PC-9 (cell line): ENCODE measurements at regions of chrX and their contacts with region 1.

Region 1: GRCh38 chrX:75655627-75656026 is 129.4 kb downstream of the MAGEE2 start:
- DNase-seq: no peak
- H3K4me3 ChIP-seq: no peak overlapping the region
- H3K27ac ChIP-seq: no peak overlapping the region
- H3K4me1 ChIP-seq: no peaks in the 10 kb centered on the region
- H3K27me3 ChIP-seq: no peaks in the 10 kb centered on the region
- CTCF ChIP-seq: no peak

Region 2: DNA sequence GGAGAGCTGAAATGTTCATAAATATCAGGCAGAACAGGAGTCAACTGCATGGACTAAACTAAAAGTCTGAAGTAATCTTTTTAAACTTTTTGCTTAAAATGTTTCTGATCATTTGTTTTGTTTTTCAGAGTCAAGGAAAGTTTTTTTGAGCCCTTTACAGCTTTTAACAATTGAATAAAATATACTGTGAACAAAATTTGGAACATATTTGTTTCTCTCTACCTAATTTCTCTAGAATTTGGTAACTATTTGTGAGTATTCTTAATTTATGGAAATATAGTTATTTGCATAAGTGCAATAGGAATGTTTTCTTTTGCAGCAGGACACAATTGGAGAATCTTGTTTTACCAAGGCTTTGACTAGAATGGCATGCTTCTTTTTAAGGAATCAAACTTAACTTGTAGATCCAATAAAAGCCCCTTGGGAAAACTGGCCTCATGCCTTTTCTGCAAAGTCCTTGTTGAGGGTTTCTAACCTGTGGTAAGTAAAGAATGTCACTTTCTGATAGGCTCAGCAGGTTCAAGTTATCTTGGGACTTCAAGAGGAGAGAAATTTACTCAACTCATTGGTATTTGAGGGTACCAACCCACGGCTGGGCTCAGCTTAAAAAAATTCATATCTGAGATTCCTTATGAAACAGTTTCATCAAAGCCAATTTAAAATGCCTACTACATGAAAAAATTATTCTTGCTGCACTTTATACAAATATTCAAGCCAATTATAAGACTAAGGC is 290.2 kb before region 1 on chrX:
- CTCF ChIA-PET with region 1: no interaction called
- POLR2A ChIA-PET with region 1: no interaction called
- intact Hi-C with region 1: no loop called
- DNase-seq: no peak
- H3K4me3 ChIP-seq: no peak overlapping the region
- H3K27ac ChIP-seq: no peak overlapping the region
- H3K4me1 ChIP-seq: no peaks in the 10 kb centered on the region
- H3K27me3 ChIP-seq: no peaks in the 10 kb centered on the region
- CTCF ChIP-seq: no peak

Region 3: DNA sequence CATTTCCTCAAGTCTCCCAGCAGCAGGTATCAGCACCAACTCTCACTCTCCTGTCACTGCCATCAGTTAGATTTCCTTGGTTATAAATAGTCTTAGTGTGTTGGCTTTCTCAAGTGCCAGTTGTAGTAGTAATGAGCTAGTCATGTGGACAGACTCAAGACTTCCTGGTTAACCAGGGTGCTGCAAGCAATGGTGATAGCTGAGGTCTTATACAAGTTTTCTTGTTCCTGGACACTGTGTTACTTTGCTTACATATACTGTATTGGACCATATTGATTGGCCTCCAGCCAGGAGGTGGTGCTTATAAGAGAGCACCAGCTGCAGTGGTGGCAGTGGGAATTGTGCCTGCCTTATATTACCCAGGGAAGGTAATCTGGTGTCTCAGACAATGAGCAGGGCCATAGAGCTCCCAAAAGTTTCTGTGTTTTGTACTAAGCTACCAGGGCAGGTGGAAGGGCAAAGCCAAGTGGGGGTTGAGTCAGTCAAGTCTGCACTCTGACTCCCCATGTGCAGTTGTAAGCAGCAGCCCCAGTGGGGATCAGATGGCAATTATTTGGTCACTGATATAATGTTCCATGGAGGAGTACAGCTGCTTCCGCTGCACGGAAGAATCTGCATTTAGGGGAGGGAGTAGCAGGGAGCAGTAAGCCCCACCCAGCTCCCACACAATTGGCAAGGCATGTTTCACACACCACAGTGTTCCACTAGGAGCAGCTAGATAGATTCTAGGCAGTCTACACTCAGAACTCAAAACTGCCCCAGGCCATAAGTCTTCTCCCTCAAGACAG is 108.7 kb before region 1 on chrX:
- CTCF ChIA-PET with region 1: interaction called, 10 read pairs
- POLR2A ChIA-PET with region 1: no interaction called
- intact Hi-C with region 1: no loop called
- DNase-seq: no peak
- H3K4me3 ChIP-seq: no peak overlapping the region
- H3K27ac ChIP-seq: no peak overlapping the region
- H3K4me1 ChIP-seq: no peaks in the 10 kb centered on the region
- H3K27me3 ChIP-seq: no peaks in the 10 kb centered on the region
- CTCF ChIP-seq: no peak